HepG2 (cell line): ENCODE measurements at regions of chr2 and their contacts with region 1.

Region 1: DNA sequence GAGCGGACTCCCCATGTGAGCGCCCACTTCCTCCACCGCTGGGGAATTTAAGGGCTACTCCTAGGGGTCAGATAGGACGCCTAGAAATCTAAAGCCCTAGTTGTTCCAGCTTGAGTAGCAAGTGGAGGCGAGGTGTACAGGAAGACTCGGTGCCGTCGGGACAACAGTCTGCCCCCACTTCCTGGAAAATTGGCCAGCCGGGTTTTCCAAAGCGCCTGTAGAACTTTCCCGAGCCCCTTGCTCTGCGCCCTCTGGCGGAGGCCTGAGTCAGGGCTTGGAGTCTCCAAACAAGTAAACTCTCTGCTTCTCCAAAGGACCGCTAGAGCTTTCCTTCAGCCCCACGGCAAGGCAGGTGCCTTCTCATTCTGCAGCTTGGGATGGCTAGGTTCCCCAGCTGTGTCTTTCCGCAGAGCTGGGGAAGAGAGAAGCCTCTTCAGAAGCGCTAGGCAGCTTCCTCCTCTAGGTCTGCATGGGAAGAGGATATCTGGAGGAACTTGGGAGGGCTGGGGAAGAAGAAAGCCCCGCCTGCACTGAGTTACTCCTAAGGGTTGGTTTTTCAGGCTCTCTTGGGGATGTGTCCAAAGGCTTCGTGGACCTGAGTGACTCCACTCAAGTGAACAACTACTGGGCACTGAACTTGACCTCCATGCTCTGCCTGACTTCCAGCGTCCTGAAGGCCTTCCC is 688 bp downstream of the SPR start:
- DNase-seq: peak; percentile 89
- ATAC-seq: peak; percentile 68
- H3K4me3 ChIP-seq: peak overlapping the region; percentile 66 to 79 (median 70)
- H3K27ac ChIP-seq: peak overlapping the region; percentile 69
- H3K4me1 ChIP-seq: peaks cover 37% of the 10 kb centered on the region
- H3K27me3 ChIP-seq: no peaks in the 10 kb centered on the region; a peak in 1 of 5 replicates
- CTCF ChIP-seq: peak; percentile 93
- EP300 ChIP-seq: peak in 1 of 2 experiments; percentile 61; a peak in 2 of 4 replicates
- POLR2A ChIP-seq: peak in 1 of 2 experiments; percentile 37; a peak in 1 of 4 replicates
- RAD21 ChIP-seq: peak; percentile 73

Region 2: DNA sequence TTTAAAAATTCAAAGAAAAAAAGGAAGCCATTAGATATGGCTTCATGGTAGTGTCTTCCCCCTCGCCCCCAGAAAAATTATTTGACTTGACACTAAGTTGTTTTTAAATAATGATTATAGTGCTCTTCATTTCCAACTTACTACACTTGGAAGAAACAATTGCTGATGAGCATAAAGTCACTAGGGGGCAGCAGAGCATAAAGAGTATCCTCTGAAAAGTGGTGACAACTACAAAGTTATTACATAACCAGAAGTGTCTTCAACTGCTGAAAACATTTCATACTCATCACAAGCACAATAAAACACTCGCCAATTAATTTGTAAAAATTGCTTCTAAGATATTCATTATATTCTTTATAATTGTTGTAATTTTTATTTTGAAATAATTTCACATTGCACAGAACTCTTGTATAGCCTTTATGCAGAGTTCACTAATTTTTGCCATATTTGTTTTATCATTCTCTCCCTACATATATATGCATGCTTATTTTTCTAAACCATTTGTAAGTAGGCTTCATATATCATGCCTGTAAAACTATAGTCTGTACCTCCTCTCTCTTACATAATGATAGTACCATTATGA is 116.9 kb before region 1 on chr2:
- CTCF ChIA-PET with region 1: interaction called, 14 read pairs
- POLR2A ChIA-PET with region 1: no interaction called
- in situ Hi-C with region 1: no loop called
- intact Hi-C with region 1: loop called (anchors 1 kb)
- DNase-seq: peak; percentile 83
- ATAC-seq: peak; percentile 56; the same call in 2 of the 3 replicates
- H3K4me3 ChIP-seq: no peak overlapping the region
- H3K27ac ChIP-seq: no peak overlapping the region
- H3K4me1 ChIP-seq: peaks cover 10% of the 10 kb centered on the region
- H3K27me3 ChIP-seq: no peaks in the 10 kb centered on the region
- CTCF ChIP-seq: peak; percentile 88
- EP300 ChIP-seq: no peak
- POLR2A ChIP-seq: no peak
- RAD21 ChIP-seq: peak; percentile 89

Region 3: GRCh38 chr2:72862239-72862988 is 25.5 kb before region 1 on chr2:
- CTCF ChIA-PET with region 1: interaction called, 13 read pairs
- POLR2A ChIA-PET with region 1: interaction called, 4 read pairs
- in situ Hi-C with region 1: no loop called
- intact Hi-C with region 1: no loop called
- DNase-seq: peak; percentile 82
- ATAC-seq: peak; percentile 99
- H3K4me3 ChIP-seq: peak overlapping the region; percentile 31 to 60 (median 51)
- H3K27ac ChIP-seq: no peak overlapping the region
- H3K4me1 ChIP-seq: peaks cover 12% of the 10 kb centered on the region
- H3K27me3 ChIP-seq: peaks cover 0 to 30% of the 10 kb centered on the region in 2 experiments; a peak in 3 of 5 replicates
- CTCF ChIP-seq: peak; percentile 100
- EP300 ChIP-seq: no peak; a peak in 1 of 4 replicates
- POLR2A ChIP-seq: no peak
- RAD21 ChIP-seq: peak; percentile 94

Region 4: DNA sequence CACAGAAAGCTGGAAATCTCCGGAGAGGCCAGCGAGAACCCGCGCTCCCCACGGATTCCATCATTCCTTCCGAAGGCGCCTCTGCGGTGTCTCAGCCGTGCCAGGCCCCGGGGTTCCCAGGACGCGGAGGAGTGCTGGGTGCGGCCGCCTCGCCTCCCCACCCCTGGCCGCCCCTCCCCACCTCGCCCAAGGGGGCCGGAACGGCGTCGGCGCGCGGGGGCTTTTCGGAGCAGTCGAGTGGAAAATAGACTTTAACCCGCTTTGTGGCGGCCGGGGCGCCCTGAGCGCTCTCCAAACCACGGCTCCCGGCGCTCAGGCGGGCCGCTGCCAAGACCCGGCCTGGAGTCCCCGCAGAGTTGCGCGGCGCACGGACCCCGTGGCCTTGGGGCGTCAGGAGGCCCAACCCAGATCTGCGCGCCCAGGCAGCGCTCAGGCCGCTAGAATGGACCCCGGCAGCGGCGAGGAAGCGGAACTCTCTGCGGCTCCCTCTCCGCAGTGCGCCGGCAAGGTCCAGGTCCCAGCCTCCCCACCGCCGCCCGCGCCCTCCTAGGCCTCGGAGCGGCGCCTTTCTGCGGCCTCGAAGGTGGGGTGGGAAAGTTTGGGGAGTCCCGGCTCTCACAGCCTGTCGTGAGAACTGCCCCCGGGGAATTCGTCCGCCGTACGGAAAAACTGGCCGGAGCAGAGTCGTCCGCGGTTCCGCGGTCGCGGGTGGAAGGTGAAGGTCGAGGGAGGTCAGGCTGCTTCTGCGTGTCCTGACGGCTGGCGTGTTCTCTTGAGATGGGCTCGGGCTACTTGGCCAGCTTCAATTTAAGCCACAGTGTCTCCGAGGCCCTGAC is 28.2 kb after region 1 on chr2:
- CTCF ChIA-PET with region 1: interaction called, 3 read pairs
- POLR2A ChIA-PET with region 1: interaction called, 13 read pairs
- in situ Hi-C with region 1: no loop called
- intact Hi-C with region 1: loop called (anchors 1 kb)
- DNase-seq: peak; percentile 60
- ATAC-seq: peak; percentile 80
- H3K4me3 ChIP-seq: peak overlapping the region; percentile 64 to 83 (median 69)
- H3K27ac ChIP-seq: no peak overlapping the region
- H3K4me1 ChIP-seq: peaks cover 41% of the 10 kb centered on the region
- H3K27me3 ChIP-seq: peaks cover 17 to 86% of the 10 kb centered on the region in 2 experiments
- CTCF ChIP-seq: peak; percentile 26; the same call in 1 of the 2 replicates
- EP300 ChIP-seq: 0 out of 4 replicates have a peak, but pooled peaks of 1 of the 2 experiments have one; percentile 36
- POLR2A ChIP-seq: no peak
- RAD21 ChIP-seq: no peak

Region 5: GRCh38 chr2:72934683-72935610 is 47.1 kb after region 1 on chr2:
- CTCF ChIA-PET with region 1: interaction called, 67 read pairs
- POLR2A ChIA-PET with region 1: interaction called, 4 read pairs
- in situ Hi-C with region 1: loop called (anchors 5 kb)
- intact Hi-C with region 1: loop called (anchors 1 kb)
- DNase-seq: peak; percentile 73
- ATAC-seq: peak; percentile 82
- H3K4me3 ChIP-seq: no peak overlapping the region
- H3K27ac ChIP-seq: no peak overlapping the region
- H3K4me1 ChIP-seq: peaks cover 9% of the 10 kb centered on the region; the same call in 1 of the 2 replicates
- H3K27me3 ChIP-seq: peaks cover 0 to 10% of the 10 kb centered on the region in 2 experiments; a peak in 2 of 5 replicates
- CTCF ChIP-seq: peak; percentile 91
- EP300 ChIP-seq: no peak
- POLR2A ChIP-seq: no peak
- RAD21 ChIP-seq: peak; percentile 83

Region 6: DNA sequence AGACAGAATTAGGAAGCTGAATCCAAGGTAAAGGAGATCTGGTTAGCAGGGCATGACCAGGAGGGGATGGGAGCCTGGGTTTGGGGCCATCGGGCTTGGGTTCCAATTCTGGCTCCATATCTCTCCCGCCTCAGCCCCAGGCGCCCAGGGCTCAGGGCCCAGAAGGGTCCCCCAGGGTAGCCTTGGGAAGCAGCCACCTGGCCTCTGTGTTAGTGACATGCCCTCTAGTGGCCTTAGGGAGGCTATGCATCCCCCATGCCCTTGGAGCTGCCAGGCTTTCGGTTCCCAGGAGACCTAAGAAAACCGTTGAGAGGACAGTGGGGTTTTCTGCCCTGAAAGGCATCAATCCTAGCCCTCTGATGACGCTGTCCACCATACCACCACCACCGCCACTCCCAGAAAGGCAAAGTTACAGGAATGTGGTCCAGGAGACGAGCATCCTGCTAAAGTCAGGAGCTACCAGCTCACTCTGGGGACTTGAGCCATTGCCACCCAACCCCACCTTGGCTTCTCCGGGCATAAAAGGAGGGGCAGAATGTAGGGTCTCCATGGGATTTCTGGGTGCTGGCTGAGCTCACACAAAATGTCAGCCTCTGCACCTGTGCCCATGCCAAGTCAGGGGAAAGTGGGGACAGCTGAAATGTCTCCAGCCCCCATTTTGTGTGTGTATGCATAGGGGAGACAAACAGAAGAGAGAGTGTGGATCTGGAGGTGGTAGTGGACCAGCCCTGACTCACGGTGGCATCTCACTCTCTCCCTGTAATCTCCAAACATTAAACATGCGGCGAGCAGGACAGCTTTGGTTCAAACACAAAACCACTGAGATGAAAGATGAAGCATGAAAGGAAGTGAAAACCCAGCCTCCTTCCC is 85.9 kb after region 1 on chr2:
- CTCF ChIA-PET with region 1: interaction called, 22 read pairs
- POLR2A ChIA-PET with region 1: interaction called, 3 read pairs
- in situ Hi-C with region 1: no loop called
- intact Hi-C with region 1: loop called (anchors 1 kb)
- DNase-seq: peak; percentile 58
- ATAC-seq: peak; percentile 97
- H3K4me3 ChIP-seq: no peak overlapping the region
- H3K27ac ChIP-seq: no peak overlapping the region
- H3K4me1 ChIP-seq: no peaks in the 10 kb centered on the region
- H3K27me3 ChIP-seq: no peaks in the 10 kb centered on the region
- CTCF ChIP-seq: peak; percentile 93
- EP300 ChIP-seq: no peak
- POLR2A ChIP-seq: no peak
- RAD21 ChIP-seq: peak; percentile 77

Region 7: DNA sequence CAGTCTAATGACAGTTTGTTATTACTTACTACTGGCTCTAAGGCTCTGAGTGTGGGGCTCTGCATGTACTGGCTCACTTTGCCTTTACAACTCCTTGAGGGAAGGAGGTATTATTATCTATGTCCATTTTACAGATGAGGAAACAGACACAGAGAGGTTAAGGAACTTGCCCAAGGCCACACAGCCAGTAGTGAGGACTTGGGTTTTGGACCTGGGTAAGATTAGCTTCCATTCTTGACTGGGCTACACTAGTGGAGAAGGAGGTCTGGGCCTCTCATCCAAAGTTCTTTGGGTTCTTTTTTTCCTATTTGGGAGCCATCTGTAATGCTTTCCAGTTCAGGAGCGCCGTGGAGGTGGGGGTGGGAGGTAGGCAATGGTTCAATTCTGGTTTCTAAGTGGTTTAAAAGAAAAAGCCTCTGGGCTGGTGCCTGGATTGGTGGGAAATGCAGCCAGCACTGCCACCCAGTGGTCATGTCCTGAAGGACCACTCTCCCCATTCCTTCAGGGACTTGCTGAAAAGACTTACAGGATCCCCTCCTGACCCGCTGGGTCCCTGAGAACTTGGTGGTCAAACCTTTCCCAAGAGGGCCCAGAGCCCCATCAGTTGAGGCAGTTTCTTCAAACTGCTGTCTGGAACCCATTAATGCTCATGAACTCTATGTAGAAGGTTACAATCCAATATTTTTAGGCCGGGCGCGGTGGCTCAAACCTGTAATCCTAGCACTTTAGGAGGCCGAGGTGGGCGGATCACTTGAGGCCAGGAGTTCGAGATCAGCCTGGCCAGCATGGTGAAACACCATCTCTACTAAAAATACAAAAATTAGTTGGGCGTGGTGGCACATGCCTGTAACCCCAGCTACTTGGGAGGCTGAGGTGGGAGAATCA is 275.8 kb after region 1 on chr2:
- CTCF ChIA-PET with region 1: interaction called, 13 read pairs
- POLR2A ChIA-PET with region 1: no interaction called
- in situ Hi-C with region 1: no loop called
- intact Hi-C with region 1: loop called (anchors 2 kb)
- DNase-seq: peak; percentile 71
- ATAC-seq: peak; percentile 92
- H3K4me3 ChIP-seq: no peak overlapping the region
- H3K27ac ChIP-seq: no peak overlapping the region
- H3K4me1 ChIP-seq: no peaks in the 10 kb centered on the region
- H3K27me3 ChIP-seq: peaks cover 4 to 8% of the 10 kb centered on the region in 2 experiments; a peak in 4 of 5 replicates
- CTCF ChIP-seq: peak; percentile 89
- EP300 ChIP-seq: no peak
- POLR2A ChIP-seq: no peak
- RAD21 ChIP-seq: peak; percentile 90